Mucosa of descending colon (tissue), 3 donors: ENCODE measurements at regions of chr7 and their contacts with region 1.

Region 1: DNA sequence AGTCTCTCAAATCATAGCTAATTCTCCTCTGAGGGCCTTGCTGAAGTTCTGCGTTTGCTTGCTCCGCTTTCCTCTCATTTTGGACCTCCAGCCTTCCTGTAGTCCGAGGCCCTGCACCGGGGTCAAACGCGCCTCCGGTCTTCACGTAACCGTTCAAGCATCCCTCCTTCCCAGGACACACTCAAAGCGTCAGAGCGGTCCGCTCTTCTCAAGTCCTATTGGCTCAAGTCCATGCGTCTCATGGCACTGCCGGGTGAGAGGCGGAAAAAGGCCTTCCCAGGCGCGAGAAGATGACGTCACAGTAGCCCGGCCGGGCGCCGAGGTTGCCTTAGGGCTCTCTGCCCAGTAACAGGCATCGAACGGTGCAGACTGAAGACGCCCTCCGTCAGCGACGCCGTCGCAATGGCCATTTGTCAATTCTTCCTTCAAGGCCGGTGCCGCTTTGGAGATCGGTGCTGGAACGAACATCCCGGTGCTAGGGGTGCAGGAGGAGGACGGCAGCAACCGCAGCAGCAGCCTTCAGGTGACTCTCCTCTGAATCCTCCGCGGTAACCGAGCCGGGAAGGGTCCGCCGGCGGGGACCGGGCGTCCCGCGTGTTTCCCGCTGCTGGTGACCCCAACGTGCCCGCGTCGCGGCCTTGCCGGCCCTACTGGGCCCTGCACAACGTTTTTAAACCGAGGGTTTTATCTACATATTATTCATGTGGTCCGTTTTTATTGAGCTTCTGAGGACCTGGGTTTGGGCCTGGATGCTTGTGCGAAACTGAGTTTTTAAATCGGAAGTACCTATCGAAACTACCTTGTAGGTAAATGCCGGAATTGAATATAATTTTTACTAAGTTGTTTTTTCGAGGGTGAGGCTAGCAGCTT is at the start of gene NUP42:
- DNase-seq: peak; percentile 97 to 98 (median 97)
- ATAC-seq: peak; percentile 99
- H3K4me3 ChIP-seq: peak within 1 kb of the TSS; percentile 65
- H3K4me1 ChIP-seq: peaks cover 7% of the 10 kb centered on the region
- CTCF ChIP-seq: no peak
- total RNA-seq, gene NUP42: 26.6 to 34.1 (median 27.6) TPM

Region 2: GRCh38 chr7:23000597-23001360 is 181.1 kb before region 1 on chr7:
- intact Hi-C with region 1: no loop called
- DNase-seq: no peak
- ATAC-seq: no peak
- H3K4me3 ChIP-seq: no peak overlapping the region
- H3K4me1 ChIP-seq: no peaks in the 10 kb centered on the region
- CTCF ChIP-seq: no peak

Region 3: GRCh38 chr7:23105644-23106056 is 76.3 kb before region 1 on chr7 and contains the start of gene KLHL7:
- intact Hi-C with region 1: loop called in 1 of 2 experiments (anchors 10 kb)
- DNase-seq: peak; percentile 98 to 100 (median 98)
- ATAC-seq: peak; percentile 100
- H3K4me3 ChIP-seq: peak within 1 kb of the TSS; percentile 76
- H3K4me1 ChIP-seq: peaks cover 8% of the 10 kb centered on the region
- CTCF ChIP-seq: no peak
- total RNA-seq, gene KLHL7: 15.6 to 25.5 (median 21.3) TPM

Region 4: DNA sequence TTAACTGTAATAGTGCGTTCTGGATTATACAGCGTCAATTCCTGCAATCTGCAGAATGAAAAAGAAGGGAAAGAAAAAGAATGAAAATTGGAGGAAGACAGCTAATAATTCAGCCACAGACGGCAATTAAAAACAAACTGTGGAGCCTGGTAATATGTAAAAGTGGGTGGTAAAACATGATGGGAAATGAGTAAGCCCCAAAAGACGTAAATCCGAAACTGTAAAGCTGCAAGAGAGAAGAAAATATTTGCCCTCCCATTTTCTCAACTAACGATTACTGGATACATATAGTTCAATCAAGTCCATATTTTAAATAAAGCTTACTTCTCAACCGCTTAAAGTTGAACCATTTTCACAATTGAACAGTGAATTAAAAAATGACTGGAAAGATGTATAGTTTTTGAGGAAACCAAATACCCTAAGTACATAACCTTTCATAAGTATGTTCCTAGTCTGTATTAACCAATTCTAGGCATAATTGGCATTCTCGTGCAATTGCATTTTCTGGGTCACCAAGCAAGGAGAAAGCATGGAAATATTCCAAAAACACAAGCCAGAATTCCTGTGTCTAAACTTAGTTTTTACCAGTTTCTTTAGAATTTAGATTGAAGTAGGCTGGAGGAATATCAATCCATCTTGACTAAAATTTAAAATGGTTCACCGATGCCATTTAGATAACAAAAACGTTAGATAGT is 162.0 kb after region 1 on chr7:
- intact Hi-C with region 1: no loop called
- DNase-seq: no peak
- ATAC-seq: no peak
- H3K4me3 ChIP-seq: no peak overlapping the region
- H3K4me1 ChIP-seq: no peaks in the 10 kb centered on the region
- CTCF ChIP-seq: no peak